Left colon (tissue), 2 donors: ENCODE measurements at regions of chr22 and their contacts with region 1.

Region 1: DNA sequence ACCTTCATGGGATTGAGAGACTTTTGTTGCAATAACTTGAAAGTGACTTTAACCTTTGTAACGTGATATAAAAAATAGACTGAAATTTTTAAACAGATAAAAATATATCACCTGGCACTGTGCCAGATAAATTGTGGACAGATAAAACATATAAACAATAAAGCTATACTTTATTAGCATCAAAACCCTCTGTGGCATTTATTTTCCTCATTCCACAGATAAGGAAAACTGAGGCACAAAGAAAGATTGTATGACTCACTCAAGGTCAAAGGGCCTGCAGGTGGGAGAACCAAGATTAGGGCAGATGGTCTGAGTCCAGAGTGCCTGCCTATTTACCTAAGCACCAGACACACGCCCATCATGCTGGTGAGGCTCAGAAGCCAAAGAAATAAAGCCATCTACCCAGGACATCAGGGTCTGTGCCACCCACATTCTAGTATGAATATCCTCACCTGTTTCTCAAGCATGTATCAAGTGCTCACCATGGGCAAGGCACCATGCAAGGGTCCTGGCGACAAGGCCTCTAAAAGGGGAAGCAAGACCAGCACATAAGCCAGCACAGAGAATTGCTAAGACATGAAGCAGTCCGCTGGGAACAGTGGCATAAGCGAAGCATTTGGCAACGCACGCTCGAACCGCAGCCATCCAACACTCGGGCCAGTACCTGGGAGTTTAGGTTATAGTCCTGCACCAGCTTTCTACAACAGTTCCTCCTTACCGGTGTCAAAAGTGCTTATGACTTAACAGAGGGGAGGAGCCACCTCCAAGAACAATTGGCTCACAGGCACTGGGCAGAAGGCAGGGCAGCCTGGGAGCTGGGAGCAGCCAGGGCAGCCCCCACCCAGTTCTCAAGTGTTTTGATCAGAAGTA is 17.6 kb downstream of the MYH9 start:
- DNase-seq: peak; percentile 70 to 85
- ATAC-seq: peak; percentile 75

Region 2: DNA sequence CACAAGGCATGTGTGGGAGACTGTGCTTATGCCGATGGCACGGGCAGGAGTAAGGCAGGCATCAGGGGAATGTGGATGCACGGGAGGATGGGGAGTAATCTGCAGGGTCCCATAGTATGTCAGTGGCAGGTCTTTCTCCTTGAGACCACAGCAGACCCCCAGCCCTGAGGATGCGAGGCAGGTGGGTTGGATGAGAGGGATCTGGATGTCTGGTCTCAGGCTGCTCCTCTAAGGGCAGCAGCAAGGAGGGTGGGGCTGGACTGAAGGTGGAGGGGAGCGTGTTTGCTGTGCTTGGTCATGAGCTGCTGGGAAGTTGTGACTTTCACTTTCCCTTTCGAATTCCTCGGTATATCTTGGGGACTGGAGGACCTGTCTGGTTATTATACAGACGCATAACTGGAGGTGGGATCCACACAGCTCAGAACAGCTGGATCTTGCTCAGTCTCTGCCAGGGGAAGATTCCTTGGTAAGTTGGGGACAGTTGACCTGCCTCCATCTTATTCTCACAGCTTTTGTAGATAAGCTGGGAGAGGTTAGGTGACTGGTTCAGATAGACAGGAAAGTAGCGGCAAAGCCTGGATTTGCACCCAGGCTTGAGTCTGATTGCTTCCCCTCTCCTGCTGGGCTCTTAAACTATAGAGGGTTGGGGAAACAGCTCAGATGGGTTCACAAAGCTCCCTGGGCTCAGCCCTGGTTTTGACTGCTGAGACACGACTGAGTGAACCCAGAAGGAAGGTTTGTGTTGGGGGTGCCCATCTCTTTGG is 117.2 kb before region 1 on chr22 and contains the start of gene APOL1:
- intact Hi-C with region 1: no loop called
- DNase-seq: peak; percentile 56 to 79
- ATAC-seq: peak; percentile 94
- total RNA-seq, gene APOL1: 23.3 to 38.2 TPM

Region 3: GRCh38 chr22:36323182-36323854 is 46.8 kb before region 1 on chr22:
- intact Hi-C with region 1: loop called in 1 of 2 experiments (anchors 5 kb)
- DNase-seq: peak in 1 of 2 donors; percentile 75
- ATAC-seq: no peak

Region 4: GRCh38 chr22:36757668-36758211 is 387.6 kb after region 1 on chr22:
- intact Hi-C with region 1: no loop called
- DNase-seq: peak; percentile 78 to 89
- ATAC-seq: peak; percentile 84